ENCODE measurements at regions of chr10 and their contacts with region 1.

Region 1: DNA sequence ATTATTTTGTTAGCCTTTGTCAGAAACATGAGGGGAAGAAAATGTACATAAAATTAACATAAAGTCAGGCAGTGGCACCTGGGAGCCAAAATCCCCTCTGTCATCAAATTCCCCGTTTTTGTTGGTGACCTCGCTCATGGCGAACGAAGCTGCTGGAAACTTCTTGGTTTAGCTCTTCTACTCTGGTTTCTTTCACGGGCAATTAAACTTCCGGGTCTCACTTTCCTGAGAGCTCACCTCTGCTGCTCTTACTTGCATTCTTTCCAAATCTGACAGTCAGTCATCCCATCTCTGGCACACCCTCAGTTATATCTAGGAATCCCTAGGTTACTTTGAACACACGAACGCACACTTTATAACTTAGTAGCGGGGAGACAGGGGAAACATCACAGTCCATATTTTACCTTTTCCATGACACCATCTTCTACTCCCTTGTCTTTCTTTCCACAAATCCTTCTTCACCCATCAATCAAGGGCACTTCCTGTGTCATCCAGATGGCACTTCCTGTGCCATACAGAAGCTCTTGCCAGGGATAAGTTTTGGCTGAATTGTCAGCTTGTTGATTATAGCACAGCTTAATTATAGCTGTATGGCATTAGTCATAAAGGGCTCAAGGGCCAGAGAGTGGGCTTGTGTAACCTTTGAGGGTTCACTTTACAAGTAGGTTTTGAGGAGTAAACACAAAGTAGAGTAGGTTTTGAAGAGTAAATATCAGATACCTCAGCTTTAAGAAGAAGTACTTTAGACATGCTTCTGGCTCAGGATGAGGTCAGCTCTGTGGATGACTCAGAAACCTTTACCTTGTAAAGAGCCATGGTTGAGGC is 105.1 kb downstream of the GATA3 start:
- DNase-seq: no peak
- H3K4me3 ChIP-seq: no peak overlapping the region
- H3K27ac ChIP-seq: no peak overlapping the region
- H3K4me1 ChIP-seq: no peaks in the 10 kb centered on the region
- H3K27me3 ChIP-seq: no peaks in the 10 kb centered on the region
- CTCF ChIP-seq: no peak
- POLR2A ChIP-seq: no peak

Region 2: DNA sequence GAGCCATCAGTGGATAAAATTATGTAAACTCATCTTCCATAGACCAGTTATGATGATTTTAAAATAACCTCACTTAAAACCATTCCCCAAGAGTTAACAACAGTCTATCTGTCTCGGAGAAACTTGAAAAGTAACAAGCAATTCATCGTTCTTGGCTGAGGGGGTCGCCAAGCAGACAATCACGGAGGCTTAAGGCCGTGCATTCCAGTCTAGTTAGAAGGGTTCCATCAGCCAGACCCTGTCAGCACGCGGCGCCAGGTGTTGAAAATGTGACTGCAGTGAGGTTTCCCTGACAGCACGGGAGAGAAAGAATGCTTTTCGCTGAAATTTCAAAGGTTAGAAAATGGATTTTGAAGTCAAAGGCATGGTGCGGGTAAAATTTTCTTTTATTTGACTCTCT is 1833.1 kb after region 1 on chr10:
- intact Hi-C with region 1: loop called (anchors 10 kb)
- DNase-seq: no peak
- H3K4me3 ChIP-seq: no peak overlapping the region
- H3K27ac ChIP-seq: no peak overlapping the region
- H3K4me1 ChIP-seq: no peaks in the 10 kb centered on the region
- H3K27me3 ChIP-seq: no peaks in the 10 kb centered on the region
- CTCF ChIP-seq: no peak
- POLR2A ChIP-seq: no peak